B cell (primary cell): ENCODE measurements at regions of chr22 and their contacts with region 1.

Region 1: GRCh38 chr22:50627642-50628542 is at the start of gene ARSA:
- DNase-seq: peak; percentile 89
- ATAC-seq: peak; percentile 94
- H3K4me3 ChIP-seq: peak within 1 kb of the TSS; percentile 72 to 92 (median 80)
- H3K4me3 Mint-ChIP-seq: peak within 1 kb of the TSS; percentile 94
- H3K27ac ChIP-seq: peak within 1 kb of the TSS; percentile 64 to 72
- H3K27ac Mint-ChIP-seq: peak within 1 kb of the TSS; percentile 80
- H3K4me1 ChIP-seq: peaks cover 14 to 25% of the 10 kb centered on the region in 2 donors
- H3K4me1 Mint-ChIP-seq: peaks cover 19% of the 10 kb centered on the region
- H3K27me3 ChIP-seq: no peaks in the 10 kb centered on the region
- H3K27me3 Mint-ChIP-seq: no peaks in the 10 kb centered on the region
- CTCF ChIP-seq: peak; percentile 38
- total RNA-seq, gene ARSA: 77.1 and 82.0 TPM in 2 replicates

Region 2: DNA sequence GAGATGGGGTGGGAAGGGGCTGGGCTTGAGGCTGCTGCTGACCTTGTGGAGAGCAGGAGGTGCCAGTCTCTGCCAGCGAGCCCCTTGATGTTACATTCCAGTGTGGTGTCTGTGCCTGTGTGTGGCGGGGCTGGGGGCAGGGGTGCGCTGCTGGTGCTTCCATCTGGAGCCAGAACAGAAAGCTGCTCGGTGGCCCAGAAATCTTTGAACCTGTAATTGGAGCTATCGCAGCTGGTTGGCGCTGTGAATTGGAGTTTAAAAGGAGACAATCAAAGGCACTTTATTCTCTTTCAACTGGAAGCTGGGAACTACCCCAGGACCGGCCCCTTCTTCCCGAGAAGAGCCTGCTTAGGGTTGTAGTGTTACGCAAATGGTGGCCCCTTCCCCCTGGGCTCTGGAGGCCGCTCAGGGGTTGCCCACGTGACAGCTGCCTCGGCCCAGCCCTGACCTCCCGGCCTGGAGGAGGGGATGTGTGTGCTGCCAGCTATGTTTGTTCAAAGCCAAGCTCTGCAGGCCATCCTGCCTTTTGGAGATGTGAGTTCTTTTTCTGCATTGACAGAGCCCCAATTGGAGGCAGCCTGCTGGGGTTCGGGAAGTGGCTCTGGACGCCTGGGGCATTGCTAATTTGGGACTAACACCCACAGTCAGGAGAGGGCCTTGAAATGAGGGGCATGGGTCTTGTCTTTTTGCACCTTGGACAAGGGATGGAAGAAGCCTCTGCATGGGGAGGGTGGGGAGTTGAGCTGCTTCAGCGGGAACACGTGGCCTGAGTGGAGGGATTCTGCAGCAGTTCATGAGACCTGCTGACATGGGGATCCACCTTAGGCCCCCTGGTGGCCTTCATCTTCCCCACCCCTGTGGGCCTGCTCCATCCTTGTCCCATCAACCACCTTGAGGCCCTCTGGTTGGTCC is 14.1 kb after region 1 on chr22:
- CTCF ChIA-PET with region 1: interaction called, 11 read pairs
- POLR2A ChIA-PET with region 1: interaction called, 3 read pairs
- intact Hi-C with region 1: loop called (anchors 1 kb)
- DNase-seq: no peak
- ATAC-seq: no peak
- H3K4me3 ChIP-seq: no peak overlapping the region
- H3K4me3 Mint-ChIP-seq: no peak overlapping the region
- H3K27ac ChIP-seq: no peak overlapping the region
- H3K27ac Mint-ChIP-seq: no peak overlapping the region
- H3K4me1 ChIP-seq: no peaks in the 10 kb centered on the region
- H3K4me1 Mint-ChIP-seq: peaks cover 1% of the 10 kb centered on the region
- H3K27me3 ChIP-seq: peaks cover 0 to 43% (median 14%) of the 10 kb centered on the region in 4 experiments
- H3K27me3 Mint-ChIP-seq: peaks cover 25% of the 10 kb centered on the region
- CTCF ChIP-seq: no peak